Esophagus squamous epithelium (tissue), 5 donors: ENCODE measurements at regions of chr5 and their contacts with region 1.

Region 1: DNA sequence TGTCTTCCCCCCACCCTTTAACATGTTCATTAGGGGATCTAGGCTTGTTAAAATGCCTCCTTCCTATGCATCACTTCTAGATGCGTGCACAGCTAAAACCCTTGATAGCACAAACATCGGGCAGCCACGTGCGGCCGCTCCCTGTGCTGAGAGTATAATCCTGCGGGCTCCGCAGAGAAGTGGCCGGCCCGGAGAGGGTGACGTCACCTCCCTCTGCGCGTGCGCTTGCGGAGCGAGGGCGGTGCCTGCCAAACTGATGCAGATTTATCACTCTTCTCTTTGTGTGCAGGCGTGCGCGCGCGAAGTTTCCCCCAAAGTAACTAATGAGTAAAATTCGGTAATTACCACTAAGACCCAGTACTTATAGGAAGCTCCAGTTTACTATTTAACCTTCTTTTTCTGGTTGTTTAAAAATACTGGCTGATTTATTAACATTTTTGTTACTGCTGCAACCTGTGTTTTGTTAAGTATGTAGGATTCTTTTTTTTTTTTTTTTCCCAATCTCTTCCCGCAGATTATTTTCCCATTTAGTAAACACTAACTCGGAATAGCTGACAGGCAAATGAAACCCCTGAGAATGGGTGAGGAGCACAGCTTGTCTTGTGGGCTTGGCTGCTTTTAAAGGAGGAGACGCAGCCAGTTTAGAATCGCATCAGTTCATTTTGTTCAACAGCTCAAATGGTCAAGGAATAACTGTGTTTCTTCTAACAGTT is 121.6 kb downstream of the TRIO start:
- DNase-seq: peak; percentile 49
- H3K4me3 ChIP-seq: peak overlapping the region in 3 of 4 donors; percentile 15 to 52 (median 22)
- H3K27ac ChIP-seq: peak overlapping the region in 3 of 4 donors; percentile 49 to 62 (median 60)
- H3K4me1 ChIP-seq: peaks cover 14 to 81% (median 29%) of the 10 kb centered on the region in 3 donors
- H3K27me3 ChIP-seq: no peaks in the 10 kb centered on the region
- CTCF ChIP-seq: no peak
- POLR2A ChIP-seq: peak in 2 of 4 donors; percentile 60 to 73

Region 2: DNA sequence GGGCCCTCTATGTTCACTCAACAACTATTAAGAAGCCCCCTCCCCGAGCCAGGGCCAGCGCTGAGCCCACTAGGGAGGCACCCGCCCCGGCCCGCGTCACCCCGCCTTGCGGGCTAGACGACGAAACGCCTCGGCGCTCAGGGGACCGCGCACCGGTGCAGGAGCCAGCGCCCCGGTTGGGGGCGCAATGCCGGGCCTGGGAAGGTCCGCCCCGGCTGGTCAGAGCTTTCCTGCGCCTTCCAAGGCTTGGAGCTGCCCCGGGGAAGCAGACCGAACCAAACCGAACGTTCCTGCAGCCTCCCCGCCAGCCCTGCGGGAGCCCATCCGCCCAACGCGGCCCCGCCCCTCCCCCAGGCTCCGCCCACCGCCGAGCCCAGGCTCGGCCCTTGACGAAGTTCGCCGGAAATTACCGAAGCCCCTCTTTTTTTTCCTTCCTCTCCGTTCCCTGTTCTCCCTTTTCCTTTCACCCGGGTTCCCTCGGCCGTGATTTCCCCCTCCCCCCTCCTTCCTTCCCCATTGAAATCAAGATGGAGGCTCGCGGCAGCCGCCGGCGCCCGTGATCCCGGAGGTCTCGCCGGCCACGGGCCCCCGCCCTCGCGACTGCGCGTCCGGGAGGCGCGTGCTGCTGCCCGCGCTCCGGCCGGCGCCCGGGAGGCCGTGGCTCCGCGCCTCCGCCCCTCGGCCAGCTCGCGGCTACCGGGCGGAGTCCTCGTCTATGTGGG is 121.8 kb before region 1 on chr5 and contains the start of gene TRIO:
- intact Hi-C with region 1: loop called (anchors 10 kb)
- DNase-seq: peak; percentile 41
- H3K4me3 ChIP-seq: peak within 1 kb of the TSS; percentile 63 to 91 (median 84)
- H3K27ac ChIP-seq: peak within 1 kb of the TSS; percentile 91 to 98 (median 93)
- H3K4me1 ChIP-seq: peaks cover 6 to 48% (median 25%) of the 10 kb centered on the region in 3 donors
- H3K27me3 ChIP-seq: peaks cover 0 to 12% (median 0%) of the 10 kb centered on the region in 4 donors
- CTCF ChIP-seq: peak in 5 of 6 experiments; percentile 23 to 45 (median 37)
- POLR2A ChIP-seq: peak in 1 of 4 donors; percentile 68
- total RNA-seq, gene TRIO: 21.2 to 105 (median 47.6) TPM

Region 3: DNA sequence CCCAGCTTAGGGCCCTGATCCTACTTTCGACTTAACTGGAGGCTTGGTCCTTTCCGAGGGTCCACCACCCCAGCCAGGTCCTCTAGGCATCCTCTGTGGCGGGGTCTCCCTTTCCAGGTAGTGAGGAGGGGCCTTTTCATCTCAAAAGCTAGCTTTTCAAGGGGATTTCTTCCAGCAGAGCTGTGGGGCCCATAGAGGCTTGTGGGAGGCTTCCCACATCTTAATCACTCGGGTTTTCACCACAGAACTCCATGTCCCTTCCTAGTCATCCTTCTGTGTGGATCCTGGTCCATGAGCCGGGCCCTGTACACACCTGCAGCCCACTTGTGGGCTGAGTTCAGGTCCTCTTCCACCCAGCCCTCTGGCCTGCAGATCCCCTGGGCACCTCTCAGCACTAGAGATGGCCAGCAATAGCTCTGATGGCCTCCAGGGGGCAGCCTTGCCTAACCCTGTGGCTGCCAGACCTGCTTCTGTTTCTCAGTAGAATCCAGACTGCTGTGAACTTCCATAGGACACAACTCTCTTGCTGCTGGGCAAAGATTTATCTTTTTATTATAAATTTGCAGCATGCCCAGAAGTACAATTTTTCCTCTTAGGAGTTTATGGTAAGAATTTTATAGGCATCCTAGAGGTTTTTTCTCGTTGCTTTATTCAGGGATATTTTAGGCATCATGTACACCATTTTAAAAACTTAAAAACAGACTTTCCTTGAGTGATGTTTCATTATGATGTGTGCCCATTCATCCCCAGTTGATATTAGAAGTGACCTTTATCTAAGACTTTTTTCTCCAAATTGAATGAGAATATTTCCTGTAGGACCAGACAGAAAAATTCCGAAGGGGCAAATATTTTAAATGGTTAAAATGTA is 87.3 kb after region 1 on chr5:
- intact Hi-C with region 1: no loop called
- DNase-seq: peak; percentile 4
- H3K4me3 ChIP-seq: no peak overlapping the region
- H3K27ac ChIP-seq: no peak overlapping the region
- H3K4me1 ChIP-seq: peaks cover 0 to 27% (median 0%) of the 10 kb centered on the region in 3 donors
- H3K27me3 ChIP-seq: no peaks in the 10 kb centered on the region
- CTCF ChIP-seq: peak; percentile 76 to 94 (median 84)
- POLR2A ChIP-seq: no peak